ENCODE measurements at regions of chr5 and their contacts with region 1.

Region 1: GRCh38 chr5:123671042-123671441 is 159.1 kb downstream of the CSNK1G3 start:
- DNase-seq: peak; percentile 66
- ATAC-seq: no peak
- H3K4me3 ChIP-seq: no peak overlapping the region
- H3K27ac ChIP-seq: no peak overlapping the region
- H3K4me1 ChIP-seq: no peaks in the 10 kb centered on the region
- H3K27me3 ChIP-seq: no peaks in the 10 kb centered on the region
- CTCF ChIP-seq: peak; percentile 74

Region 2: DNA sequence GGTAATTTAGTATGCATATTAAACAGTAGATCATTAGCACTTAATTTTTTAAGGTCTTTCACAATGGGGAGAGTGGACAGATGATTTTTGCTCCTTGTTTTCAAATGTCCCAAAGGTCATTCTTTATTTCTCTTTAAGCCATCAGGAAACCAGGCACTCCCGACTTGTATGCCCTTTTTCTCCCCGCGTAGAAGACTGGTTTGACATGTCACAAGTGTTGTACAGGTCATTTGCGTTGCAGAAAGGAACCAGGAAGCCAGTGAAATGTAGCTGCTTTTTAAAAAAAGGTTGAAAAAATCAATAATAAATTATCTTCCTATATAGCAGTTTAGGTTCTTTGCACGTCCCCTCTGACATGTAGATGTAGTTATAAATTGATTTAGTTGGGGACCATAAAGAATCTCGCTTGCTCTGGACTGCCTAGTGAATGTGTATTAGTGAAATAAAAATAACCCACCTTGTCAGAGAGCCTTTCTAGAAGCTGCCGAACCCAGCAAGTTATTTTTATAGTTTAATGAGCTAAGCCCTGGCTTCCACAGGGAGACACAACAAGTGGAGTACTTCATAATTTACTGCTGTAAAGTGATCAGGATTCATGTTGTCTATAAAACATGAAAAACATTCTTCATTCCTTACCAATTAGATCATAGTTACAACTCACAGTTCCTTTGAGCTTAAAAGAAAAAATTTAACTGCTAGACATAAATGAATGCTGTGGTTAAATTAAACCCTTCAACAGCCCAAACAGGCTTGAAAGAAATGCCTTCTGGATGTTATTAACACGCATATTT is 245.5 kb after region 1 on chr5:
- CTCF ChIA-PET with region 1: no interaction called
- POLR2A ChIA-PET with region 1: no interaction called
- intact Hi-C with region 1: loop called (anchors 10 kb)
- DNase-seq: peak; percentile 53
- ATAC-seq: peak; percentile 87
- H3K4me3 ChIP-seq: no peak overlapping the region
- H3K27ac ChIP-seq: no peak overlapping the region
- H3K4me1 ChIP-seq: peaks cover 4% of the 10 kb centered on the region
- H3K27me3 ChIP-seq: no peaks in the 10 kb centered on the region
- CTCF ChIP-seq: no peak

Region 3: GRCh38 chr5:123937230-123937629 is 266.2 kb after region 1 on chr5:
- CTCF ChIA-PET with region 1: no interaction called
- POLR2A ChIA-PET with region 1: no interaction called
- intact Hi-C with region 1: loop called (anchors 5 kb)
- DNase-seq: peak; percentile 72
- ATAC-seq: peak; percentile 48; the same call in 1 of the 2 replicates
- H3K4me3 ChIP-seq: no peak overlapping the region
- H3K27ac ChIP-seq: no peak overlapping the region
- H3K4me1 ChIP-seq: no peaks in the 10 kb centered on the region
- H3K27me3 ChIP-seq: no peaks in the 10 kb centered on the region
- CTCF ChIP-seq: peak; percentile 64

Measured in PC-3 (cell line).